Right lobe of liver (tissue), 6 donors: ENCODE measurements at regions of chr2 and their contacts with region 1.

Region 1: GRCh38 chr2:241463276-241464135 is 44.9 kb downstream of the STK25 start:
- DNase-seq: no peak
- ATAC-seq: no peak
- H3K4me3 ChIP-seq: no peak overlapping the region
- H3K27ac ChIP-seq: no peak overlapping the region
- H3K4me1 ChIP-seq: no peaks in the 10 kb centered on the region
- H3K27me3 ChIP-seq: no peaks in the 10 kb centered on the region
- CTCF ChIP-seq: no peak
- POLR2A ChIP-seq: no peak

Region 2: DNA sequence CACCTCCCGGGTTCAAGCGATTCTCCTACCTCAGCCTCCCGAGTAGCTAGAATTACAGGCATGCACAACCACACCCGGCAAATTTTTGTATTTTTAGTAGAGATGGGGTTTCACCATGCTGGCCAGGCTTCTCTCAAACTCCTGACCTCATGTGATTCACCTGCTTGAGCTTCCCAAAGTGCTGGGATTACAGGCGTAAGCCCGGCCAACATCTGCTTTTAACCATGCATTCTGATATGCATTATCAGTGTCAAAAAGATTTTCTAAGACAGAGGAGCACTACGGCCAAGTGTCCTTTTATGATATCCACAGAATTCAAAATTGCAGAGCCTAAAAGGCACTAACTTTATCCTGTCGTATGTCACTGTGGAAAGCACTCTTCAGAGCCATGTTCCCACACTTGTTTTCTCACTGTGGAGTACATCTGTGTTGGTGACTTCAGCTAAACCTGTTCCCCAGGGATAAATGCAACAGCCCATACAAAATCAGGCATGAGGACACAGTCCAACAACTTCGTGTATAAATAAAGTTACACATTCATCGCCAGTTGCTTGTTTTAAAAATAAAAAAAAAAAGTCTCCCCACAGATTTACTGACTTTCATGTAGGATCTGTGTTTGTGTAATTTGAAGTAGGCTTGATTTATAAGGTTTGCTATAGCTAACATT is 11.5 kb before region 1 on chr2:
- intact Hi-C with region 1: loop called in 1 of 2 experiments (anchors 2 kb)
- DNase-seq: no peak
- ATAC-seq: no peak
- H3K4me3 ChIP-seq: no peak overlapping the region
- H3K27ac ChIP-seq: no peak overlapping the region
- H3K4me1 ChIP-seq: peaks cover 0 to 12% (median 0%) of the 10 kb centered on the region in 4 donors
- H3K27me3 ChIP-seq: no peaks in the 10 kb centered on the region
- CTCF ChIP-seq: no peak
- POLR2A ChIP-seq: no peak